ENCODE measurements at regions of chrX and their contacts with region 1.

Region 1: GRCh38 chrX:21985332-21985777 is 44.8 kb downstream of the SMS start:
- DNase-seq: peak; percentile 80
- ATAC-seq: peak; percentile 94
- H3K4me3 ChIP-seq: no peak overlapping the region
- H3K4me3 Mint-ChIP-seq: no peak overlapping the region
- H3K27ac ChIP-seq: no peak overlapping the region
- H3K27ac Mint-ChIP-seq: peak overlapping the region; percentile 10
- H3K4me1 ChIP-seq: peaks cover 0 to 13% of the 10 kb centered on the region in 2 donors
- H3K4me1 Mint-ChIP-seq: peaks cover 13% of the 10 kb centered on the region
- H3K27me3 ChIP-seq: no peaks in the 10 kb centered on the region
- H3K27me3 Mint-ChIP-seq: no peaks in the 10 kb centered on the region
- CTCF ChIP-seq: peak; percentile 82

Region 2: DNA sequence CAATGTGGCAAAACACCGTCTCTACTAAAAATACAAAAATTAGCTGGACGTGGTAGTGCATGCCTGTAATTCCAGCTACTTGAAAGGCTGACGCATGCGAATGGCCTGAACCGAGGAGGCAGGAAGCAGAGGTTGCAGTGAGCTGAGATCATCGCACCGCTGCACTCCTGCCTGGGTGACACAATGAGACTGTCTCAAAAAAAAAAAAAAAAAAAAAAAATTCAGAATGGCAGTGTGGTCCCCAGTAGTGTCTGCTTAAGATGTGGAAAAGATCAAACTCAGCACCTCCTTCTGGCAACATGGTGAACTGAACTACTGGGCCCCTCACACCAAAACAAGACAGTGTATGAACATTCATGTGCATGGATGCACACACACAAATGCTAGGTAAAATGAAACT is 12.6 kb before region 1 on chrX:
- CTCF ChIA-PET with region 1: interaction called, 14 read pairs
- POLR2A ChIA-PET with region 1: no interaction called
- intact Hi-C with region 1: no loop called
- DNase-seq: peak; percentile 43
- ATAC-seq: peak; percentile 58
- H3K4me3 ChIP-seq: no peak overlapping the region
- H3K4me3 Mint-ChIP-seq: peak overlapping the region; percentile 61
- H3K27ac ChIP-seq: peak overlapping the region in 1 of 2 donors; percentile 67
- H3K27ac Mint-ChIP-seq: peak overlapping the region; percentile 84
- H3K4me1 ChIP-seq: peaks cover 9 to 21% of the 10 kb centered on the region in 2 donors
- H3K4me1 Mint-ChIP-seq: peaks cover 27% of the 10 kb centered on the region
- H3K27me3 ChIP-seq: no peaks in the 10 kb centered on the region
- H3K27me3 Mint-ChIP-seq: no peaks in the 10 kb centered on the region
- CTCF ChIP-seq: no peak

Region 3: GRCh38 chrX:22192417-22193060 is 207.2 kb after region 1 on chrX:
- CTCF ChIA-PET with region 1: interaction called, 27 read pairs
- POLR2A ChIA-PET with region 1: no interaction called
- intact Hi-C with region 1: no loop called
- DNase-seq: peak; percentile 60
- ATAC-seq: peak; percentile 64
- H3K4me3 ChIP-seq: no peak overlapping the region
- H3K4me3 Mint-ChIP-seq: peak overlapping the region; percentile 42
- H3K27ac ChIP-seq: no peak overlapping the region
- H3K27ac Mint-ChIP-seq: no peak overlapping the region
- H3K4me1 ChIP-seq: peaks cover 17 to 18% of the 10 kb centered on the region in 2 donors
- H3K4me1 Mint-ChIP-seq: peaks cover 16% of the 10 kb centered on the region
- H3K27me3 ChIP-seq: no peaks in the 10 kb centered on the region
- H3K27me3 Mint-ChIP-seq: no peaks in the 10 kb centered on the region
- CTCF ChIP-seq: peak; percentile 81

Region 4: GRCh38 chrX:22748093-22748999 is 763.0 kb after region 1 on chrX:
- CTCF ChIA-PET with region 1: interaction called, 59 read pairs
- POLR2A ChIA-PET with region 1: no interaction called
- intact Hi-C with region 1: no loop called
- DNase-seq: peak; percentile 56
- ATAC-seq: peak; percentile 45
- H3K4me3 ChIP-seq: no peak overlapping the region
- H3K4me3 Mint-ChIP-seq: no peak overlapping the region
- H3K27ac ChIP-seq: no peak overlapping the region
- H3K27ac Mint-ChIP-seq: no peak overlapping the region
- H3K4me1 ChIP-seq: no peaks in the 10 kb centered on the region
- H3K4me1 Mint-ChIP-seq: no peaks in the 10 kb centered on the region
- H3K27me3 ChIP-seq: no peaks in the 10 kb centered on the region
- H3K27me3 Mint-ChIP-seq: no peaks in the 10 kb centered on the region
- CTCF ChIP-seq: peak; percentile 71

Measured in B cell (primary cell).